Right ventricle myocardium inferior (tissue), 1 donor: ENCODE measurements at regions of chr2 and their contacts with region 1.

Region 1: DNA sequence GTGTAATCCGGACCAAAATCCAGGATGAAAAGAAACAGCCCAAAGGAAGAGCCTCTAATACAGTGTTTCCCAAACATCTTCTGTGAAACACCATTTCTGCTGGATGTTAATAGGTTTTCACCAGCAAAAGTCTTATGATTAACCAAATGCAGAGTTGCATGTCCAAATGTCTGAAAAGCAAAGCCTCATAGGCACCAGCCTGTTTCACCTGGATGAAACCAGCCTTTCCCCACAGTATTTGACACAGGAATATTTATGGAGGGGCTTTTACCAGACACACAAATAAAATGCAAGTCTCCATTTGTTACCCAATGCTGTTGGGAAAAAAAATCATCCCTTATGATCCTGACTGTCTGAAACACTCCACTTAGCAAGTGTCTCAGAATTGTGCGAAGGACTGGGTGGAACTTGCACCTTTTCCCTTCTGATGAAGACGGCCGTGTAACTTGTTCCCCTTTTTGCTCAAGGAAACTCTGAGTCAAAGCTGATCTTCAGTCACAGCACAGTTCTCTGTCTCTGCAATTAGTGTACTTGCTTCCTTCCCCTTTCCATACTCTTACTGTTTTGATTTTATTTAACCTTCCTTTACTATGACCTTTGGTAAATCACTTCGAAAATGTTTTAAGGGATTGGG is 70.3 kb upstream of the IL1R2 start:
- DNase-seq: no peak
- ATAC-seq: peak; percentile 44

Region 2: GRCh38 chr2:101946372-101947039 is 25.1 kb after region 1 on chr2:
- intact Hi-C with region 1: loop called (anchors 2 kb)
- DNase-seq: no peak
- ATAC-seq: no peak

Region 3: DNA sequence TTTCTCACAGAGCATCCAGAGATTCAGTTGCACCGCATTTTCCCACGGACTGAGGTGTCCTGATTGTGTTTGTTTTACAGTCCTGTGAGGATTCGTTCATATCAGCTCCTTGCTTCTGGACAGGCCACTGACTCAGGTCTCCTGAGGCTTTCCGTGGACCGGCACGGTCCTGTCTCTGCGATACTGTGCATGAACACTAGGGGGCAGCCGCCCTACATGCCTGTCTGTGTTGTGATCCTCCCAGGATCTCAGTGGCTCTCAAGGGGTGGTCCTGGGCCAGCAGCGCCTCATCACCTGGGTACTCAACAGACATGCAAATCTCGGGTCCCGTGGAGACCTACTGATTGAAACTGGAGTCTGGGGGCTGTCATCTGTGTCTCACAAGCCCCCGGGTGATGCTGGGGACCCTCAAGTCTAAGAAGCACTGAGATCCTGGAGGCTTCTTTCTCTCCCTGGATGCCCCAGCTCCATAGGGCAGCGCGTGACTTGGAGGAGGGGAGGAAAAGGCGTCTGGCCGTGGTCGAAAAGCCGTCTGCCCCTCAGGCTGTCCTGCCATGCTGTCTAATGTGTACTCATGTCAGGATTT is 99.3 kb after region 1 on chr2:
- intact Hi-C with region 1: no loop called
- DNase-seq: peak; percentile 92
- ATAC-seq: peak; percentile 94